ENCODE measurements at regions of chr11 and their contacts with region 1.

Region 1: DNA sequence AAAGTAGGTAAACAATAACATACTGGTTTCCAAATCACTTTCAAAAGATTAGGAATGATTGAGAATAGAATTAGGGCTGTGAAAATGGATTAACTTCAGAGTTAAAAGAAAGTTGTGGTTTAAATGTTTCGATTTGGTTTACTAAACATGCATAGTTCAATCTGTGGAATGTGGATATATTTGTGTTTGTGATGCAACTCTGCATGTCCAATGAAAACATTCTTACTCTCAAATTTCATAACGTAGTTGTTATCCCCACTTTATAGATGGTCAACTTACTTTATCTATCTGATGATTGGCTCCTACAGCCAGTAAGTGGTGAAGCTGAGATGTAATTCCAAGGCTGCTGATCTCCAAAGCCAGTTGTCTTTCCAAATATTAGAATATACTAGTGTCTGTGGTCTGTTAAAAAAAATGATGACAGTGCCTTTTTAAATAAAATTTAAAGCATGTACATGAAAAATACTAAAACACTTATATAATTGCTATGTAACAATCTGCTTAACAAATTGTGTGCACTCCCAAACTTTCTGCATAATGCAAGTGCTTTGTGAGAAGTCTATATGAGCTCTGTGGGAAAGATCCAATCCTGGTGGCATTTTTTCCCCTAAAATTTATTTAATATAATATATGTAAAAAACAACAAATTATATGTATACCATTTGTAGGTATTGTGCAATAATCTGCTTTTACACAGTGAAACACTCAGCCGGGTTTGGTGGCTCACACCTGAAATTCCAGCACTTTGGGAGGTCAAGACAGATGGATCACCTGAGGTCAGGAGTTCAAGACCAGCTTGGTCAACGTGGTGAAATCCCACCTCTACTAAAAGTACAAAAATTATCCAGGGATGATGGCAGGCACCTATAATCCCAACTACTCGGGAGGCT is 9.7 kb upstream of the SIK3 start:
- DNase-seq: no peak
- ATAC-seq: no peak
- H3K4me3 ChIP-seq: no peak overlapping the region
- H3K4me3 Mint-ChIP-seq: no peak overlapping the region
- H3K27ac ChIP-seq: no peak overlapping the region
- H3K27ac Mint-ChIP-seq: no peak overlapping the region
- H3K4me1 ChIP-seq: no peaks in the 10 kb centered on the region
- H3K4me1 Mint-ChIP-seq: peaks cover 3% of the 10 kb centered on the region
- H3K27me3 ChIP-seq: no peaks in the 10 kb centered on the region
- H3K27me3 Mint-ChIP-seq: no peaks in the 10 kb centered on the region
- CTCF ChIP-seq: no peak

Region 2: DNA sequence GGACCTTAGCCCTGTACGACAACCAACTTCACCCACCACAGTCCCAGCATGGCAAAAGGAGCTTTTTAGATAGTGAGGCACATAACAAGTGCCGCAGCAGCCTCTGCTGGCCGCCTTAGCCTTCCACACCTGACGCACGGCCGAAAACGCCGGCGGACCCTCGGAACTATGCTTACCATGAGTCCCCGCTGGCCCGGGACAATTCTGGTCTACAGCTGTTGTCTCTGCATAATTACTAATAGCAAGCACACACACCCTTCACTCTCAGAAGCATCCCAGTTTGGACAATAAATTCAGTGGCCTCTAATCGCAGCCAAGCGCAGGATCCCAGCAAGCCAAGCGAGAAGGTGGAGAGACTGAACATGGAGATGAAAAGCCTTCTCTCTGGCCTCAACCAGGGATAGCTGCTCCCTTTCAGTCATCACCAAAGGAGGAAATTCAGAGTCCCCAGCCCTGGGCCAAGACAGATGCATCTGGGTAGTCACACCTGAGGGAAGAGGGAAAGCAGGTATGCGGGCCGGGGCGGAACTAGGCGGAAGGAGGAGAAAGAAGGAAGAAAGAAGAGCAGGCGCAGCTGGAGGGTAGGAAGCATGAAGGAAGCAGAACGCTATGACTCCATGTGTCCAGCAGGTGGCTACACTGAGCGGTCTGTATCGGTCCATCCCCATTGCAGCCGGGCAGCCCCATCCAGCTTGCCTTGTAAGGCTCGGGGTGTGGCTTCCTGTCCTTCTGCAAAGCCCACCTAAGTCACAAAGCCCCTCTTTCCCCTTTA is 375.5 kb before region 1 on chr11:
- CTCF ChIA-PET with region 1: interaction called, 21 read pairs
- POLR2A ChIA-PET with region 1: no interaction called
- intact Hi-C with region 1: loop called (anchors 1 kb)
- DNase-seq: peak; percentile 22 to 71 (median 55)
- ATAC-seq: peak; percentile 93
- H3K4me3 ChIP-seq: no peak overlapping the region
- H3K4me3 Mint-ChIP-seq: no peak overlapping the region
- H3K27ac ChIP-seq: no peak overlapping the region
- H3K27ac Mint-ChIP-seq: no peak overlapping the region
- H3K4me1 ChIP-seq: no peaks in the 10 kb centered on the region
- H3K4me1 Mint-ChIP-seq: peaks cover 10% of the 10 kb centered on the region
- H3K27me3 ChIP-seq: no peaks in the 10 kb centered on the region
- H3K27me3 Mint-ChIP-seq: peaks cover 3% of the 10 kb centered on the region
- CTCF ChIP-seq: peak; percentile 79

Region 3: GRCh38 chr11:116835791-116836631 is 271.9 kb before region 1 on chr11:
- CTCF ChIA-PET with region 1: interaction called, 19 read pairs
- POLR2A ChIA-PET with region 1: interaction called, 4 read pairs
- intact Hi-C with region 1: no loop called
- DNase-seq: peak; percentile 65 to 92 (median 82)
- ATAC-seq: peak; percentile 97
- H3K4me3 ChIP-seq: peak overlapping the region; percentile 63 to 64
- H3K4me3 Mint-ChIP-seq: peak overlapping the region; percentile 84
- H3K27ac ChIP-seq: peak overlapping the region; percentile 57 to 63
- H3K27ac Mint-ChIP-seq: peak overlapping the region; percentile 70
- H3K4me1 ChIP-seq: peaks cover 16% of the 10 kb centered on the region
- H3K4me1 Mint-ChIP-seq: peaks cover 14% of the 10 kb centered on the region
- H3K27me3 ChIP-seq: no peaks in the 10 kb centered on the region
- H3K27me3 Mint-ChIP-seq: no peaks in the 10 kb centered on the region
- CTCF ChIP-seq: peak; percentile 54

Region 4: DNA sequence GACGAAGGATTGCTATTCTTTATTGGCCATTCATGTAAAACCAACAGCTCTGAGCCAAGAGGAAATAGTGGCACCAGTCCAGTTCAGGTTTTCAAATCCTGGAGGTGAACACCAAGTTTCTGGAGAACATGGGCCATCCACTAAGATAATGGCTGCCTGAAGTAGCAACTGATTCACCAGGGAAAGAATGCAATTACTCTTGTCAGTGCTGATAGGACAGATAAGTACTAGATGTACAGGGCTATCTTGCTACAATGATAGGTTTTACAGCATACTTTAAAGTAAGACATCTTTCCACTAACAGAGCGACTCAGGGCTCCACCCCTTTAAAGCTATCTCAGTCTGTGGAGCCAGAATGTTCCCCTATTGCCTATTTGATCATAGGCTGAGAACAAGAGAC is 233.7 kb before region 1 on chr11:
- CTCF ChIA-PET with region 1: interaction called, 104 read pairs
- POLR2A ChIA-PET with region 1: no interaction called
- intact Hi-C with region 1: loop called in 1 of 2 experiments (anchors 1 kb)
- DNase-seq: no peak
- ATAC-seq: no peak
- H3K4me3 ChIP-seq: no peak overlapping the region
- H3K4me3 Mint-ChIP-seq: no peak overlapping the region
- H3K27ac ChIP-seq: no peak overlapping the region
- H3K27ac Mint-ChIP-seq: no peak overlapping the region
- H3K4me1 ChIP-seq: no peaks in the 10 kb centered on the region
- H3K4me1 Mint-ChIP-seq: no peaks in the 10 kb centered on the region
- H3K27me3 ChIP-seq: no peaks in the 10 kb centered on the region
- H3K27me3 Mint-ChIP-seq: no peaks in the 10 kb centered on the region
- CTCF ChIP-seq: no peak

Region 5: GRCh38 chr11:116895048-116895757 is 212.7 kb before region 1 on chr11:
- CTCF ChIA-PET with region 1: interaction called, 64 read pairs
- POLR2A ChIA-PET with region 1: no interaction called
- intact Hi-C with region 1: loop called in 1 of 2 experiments (anchors 1 kb)
- DNase-seq: peak in 2 of 9 experiments; percentile 45 to 57
- ATAC-seq: no peak
- H3K4me3 ChIP-seq: no peak overlapping the region
- H3K4me3 Mint-ChIP-seq: no peak overlapping the region
- H3K27ac ChIP-seq: no peak overlapping the region
- H3K27ac Mint-ChIP-seq: peak overlapping the region; percentile 38
- H3K4me1 ChIP-seq: peaks cover 3% of the 10 kb centered on the region
- H3K4me1 Mint-ChIP-seq: peaks cover 13% of the 10 kb centered on the region
- H3K27me3 ChIP-seq: no peaks in the 10 kb centered on the region
- H3K27me3 Mint-ChIP-seq: no peaks in the 10 kb centered on the region
- CTCF ChIP-seq: no peak

Region 6: DNA sequence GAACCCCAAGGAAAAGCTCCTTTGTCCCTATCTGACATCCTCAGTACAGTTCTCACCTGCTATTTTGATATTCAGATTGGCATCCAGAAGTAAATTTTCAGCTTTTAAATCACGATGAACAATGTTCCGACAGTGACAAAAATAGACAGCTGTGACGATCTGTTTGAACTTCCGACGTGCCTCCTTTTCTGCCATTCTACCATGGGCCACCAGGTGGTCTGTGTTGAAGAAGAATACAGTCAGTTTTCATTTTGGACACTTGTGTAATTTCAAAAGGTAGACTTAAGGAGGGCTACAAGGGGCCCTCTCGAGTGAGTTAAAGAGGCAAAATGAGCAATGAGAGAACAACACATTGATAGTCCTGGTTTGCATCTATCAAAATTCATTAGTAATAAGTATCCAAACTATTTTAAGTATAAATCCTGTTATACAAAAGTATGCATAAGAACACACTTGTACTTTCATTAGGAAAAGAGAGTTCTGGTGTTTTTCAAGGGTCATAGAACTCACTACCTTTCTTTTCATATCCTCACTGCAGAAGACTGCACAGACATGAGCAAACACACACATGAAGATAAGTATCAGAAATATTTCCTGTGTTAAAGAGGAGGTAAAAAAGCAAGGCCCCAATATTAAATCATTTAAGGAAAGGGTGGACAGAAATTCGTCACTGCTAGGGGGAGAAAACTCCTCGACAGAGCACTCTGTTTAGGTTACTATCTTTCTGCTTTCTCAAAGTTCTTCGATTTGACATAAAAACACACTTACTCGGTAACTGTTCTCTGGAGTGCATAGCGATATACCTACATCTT is 180.6 kb before region 1 on chr11:
- CTCF ChIA-PET with region 1: interaction called, 24 read pairs
- POLR2A ChIA-PET with region 1: no interaction called
- intact Hi-C with region 1: no loop called
- DNase-seq: peak; percentile 18 to 81 (median 56)
- ATAC-seq: peak; percentile 59
- H3K4me3 ChIP-seq: no peak overlapping the region
- H3K4me3 Mint-ChIP-seq: peak overlapping the region; percentile 65
- H3K27ac ChIP-seq: peak overlapping the region; percentile 37 to 96
- H3K27ac Mint-ChIP-seq: peak overlapping the region; percentile 86
- H3K4me1 ChIP-seq: peaks cover 75% of the 10 kb centered on the region
- H3K4me1 Mint-ChIP-seq: peaks cover 80% of the 10 kb centered on the region
- H3K27me3 ChIP-seq: no peaks in the 10 kb centered on the region
- H3K27me3 Mint-ChIP-seq: no peaks in the 10 kb centered on the region
- CTCF ChIP-seq: peak; percentile 71

Region 7: DNA sequence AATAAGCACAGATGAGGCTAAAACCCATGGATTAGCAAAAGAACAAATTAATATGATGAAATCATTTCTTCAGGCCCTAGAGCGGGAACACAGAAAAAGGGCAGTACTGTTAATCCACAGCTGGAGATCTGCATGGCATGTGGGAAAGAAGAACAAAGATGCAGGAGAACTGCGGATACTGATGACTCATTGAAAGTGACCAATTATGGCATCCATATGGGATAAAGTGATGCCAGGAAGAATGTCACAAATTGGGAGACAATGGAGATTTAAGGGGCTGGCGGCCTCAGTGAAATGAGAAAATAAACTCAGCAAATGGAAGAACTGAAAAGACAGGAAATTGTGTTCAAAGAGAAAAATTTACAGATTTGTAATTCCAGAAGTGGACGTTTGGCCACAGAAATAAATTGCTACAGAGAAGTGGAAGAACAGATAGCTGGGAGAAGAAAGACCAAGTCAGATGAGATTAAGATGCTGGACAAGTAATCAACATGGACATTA is 49.1 kb before region 1 on chr11:
- CTCF ChIA-PET with region 1: no interaction called
- POLR2A ChIA-PET with region 1: no interaction called
- intact Hi-C with region 1: no loop called
- DNase-seq: no peak
- ATAC-seq: no peak
- H3K4me3 ChIP-seq: no peak overlapping the region
- H3K4me3 Mint-ChIP-seq: no peak overlapping the region
- H3K27ac ChIP-seq: no peak overlapping the region
- H3K27ac Mint-ChIP-seq: no peak overlapping the region
- H3K4me1 ChIP-seq: peaks cover 8% of the 10 kb centered on the region
- H3K4me1 Mint-ChIP-seq: peaks cover 59% of the 10 kb centered on the region
- H3K27me3 ChIP-seq: no peaks in the 10 kb centered on the region
- H3K27me3 Mint-ChIP-seq: no peaks in the 10 kb centered on the region
- CTCF ChIP-seq: no peak

Region 8: GRCh38 chr11:117226388-117227385 is 118.7 kb after region 1 on chr11:
- CTCF ChIA-PET with region 1: interaction called, 32 read pairs
- POLR2A ChIA-PET with region 1: no interaction called
- intact Hi-C with region 1: loop called (anchors 1 to 2 kb)
- DNase-seq: peak in 7 of 9 experiments; percentile 26 to 86 (median 51)
- ATAC-seq: peak; percentile 71
- H3K4me3 ChIP-seq: no peak overlapping the region
- H3K4me3 Mint-ChIP-seq: no peak overlapping the region
- H3K27ac ChIP-seq: no peak overlapping the region
- H3K27ac Mint-ChIP-seq: peak overlapping the region; percentile 52
- H3K4me1 ChIP-seq: peaks cover 28% of the 10 kb centered on the region
- H3K4me1 Mint-ChIP-seq: peaks cover 38% of the 10 kb centered on the region
- H3K27me3 ChIP-seq: no peaks in the 10 kb centered on the region
- H3K27me3 Mint-ChIP-seq: no peaks in the 10 kb centered on the region
- CTCF ChIP-seq: peak; percentile 71